Right ventricle myocardium superior (tissue), 1 donor: ENCODE measurements at regions of chrX and their contacts with region 1.

Region 1: GRCh38 chrX:69538321-69538876 is 34.3 kb downstream of the NALF2 start:
- DNase-seq: peak; percentile 83
- ATAC-seq: peak; percentile 99

Region 2: DNA sequence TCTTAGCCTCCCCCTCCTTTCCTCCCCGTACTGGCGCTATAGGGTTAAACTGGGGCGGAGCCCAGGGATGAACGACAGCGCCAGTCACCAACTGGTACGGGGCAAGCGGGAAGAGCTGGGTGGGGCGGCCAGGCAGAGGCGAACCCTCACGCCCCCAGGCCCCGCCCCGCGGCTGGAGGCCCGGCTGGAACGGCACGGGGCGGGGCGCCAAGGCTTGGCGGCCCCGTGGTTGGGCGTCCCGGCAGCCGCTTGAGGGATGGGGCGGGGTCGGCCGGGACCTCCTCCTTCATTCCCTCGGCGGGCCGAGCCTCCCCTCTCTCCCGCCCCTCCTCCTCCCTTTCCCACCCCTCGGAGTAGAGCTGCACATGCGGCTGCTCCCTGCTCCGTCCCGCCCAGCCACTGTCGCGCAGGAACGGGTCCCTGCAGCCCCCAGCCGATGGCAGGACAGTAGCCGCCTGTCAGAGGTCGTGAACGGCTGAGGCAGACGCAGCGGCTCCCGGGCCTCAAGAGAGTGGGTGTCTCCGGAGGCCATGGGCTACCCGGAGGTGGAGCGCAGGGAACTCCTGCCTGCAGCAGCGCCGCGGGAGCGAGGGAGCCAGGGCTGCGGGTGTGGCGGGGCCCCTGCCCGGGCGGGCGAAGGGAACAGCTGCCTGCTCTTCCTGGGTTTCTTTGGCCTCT is 77.5 kb after region 1 on chrX and contains the start of gene EDA:
- intact Hi-C with region 1: loop called (anchors 5 kb)
- DNase-seq: peak; percentile 90
- ATAC-seq: peak; percentile 98
- total RNA-seq, gene EDA: 11.1 TPM

Region 3: GRCh38 chrX:70030301-70030767 is 491.9 kb after region 1 on chrX:
- intact Hi-C with region 1: loop called (anchors 10 kb)
- DNase-seq: no peak
- ATAC-seq: peak; percentile 77

Region 4: GRCh38 chrX:70096052-70096451 is 557.7 kb after region 1 on chrX:
- intact Hi-C with region 1: loop called (anchors 5 kb)
- DNase-seq: no peak
- ATAC-seq: peak; percentile 48